PC-3 (cell line): ENCODE measurements at regions of chr22 and their contacts with region 1.

Region 1: GRCh38 chr22:46035742-46036557 is 59.0 kb upstream of the WNT7B start:
- DNase-seq: peak; percentile 97
- ATAC-seq: peak; percentile 88
- H3K4me3 ChIP-seq: peak overlapping the region; percentile 81
- H3K27ac ChIP-seq: peak overlapping the region; percentile 85
- H3K4me1 ChIP-seq: peaks cover 23% of the 10 kb centered on the region
- H3K27me3 ChIP-seq: no peaks in the 10 kb centered on the region
- CTCF ChIP-seq: no peak

Region 2: GRCh38 chr22:46006379-46007002 is 29.5 kb before region 1 on chr22:
- CTCF ChIA-PET with region 1: interaction called, 77 read pairs
- POLR2A ChIA-PET with region 1: interaction called, 23 read pairs
- intact Hi-C with region 1: loop called (anchors 1 kb)
- DNase-seq: peak; percentile 85
- ATAC-seq: peak; percentile 63
- H3K4me3 ChIP-seq: peak overlapping the region; percentile 56
- H3K27ac ChIP-seq: peak overlapping the region; percentile 96
- H3K4me1 ChIP-seq: peaks cover 50% of the 10 kb centered on the region
- H3K27me3 ChIP-seq: no peaks in the 10 kb centered on the region
- CTCF ChIP-seq: peak; percentile 85

Region 3: GRCh38 chr22:46013460-46014416 is 22.2 kb before region 1 on chr22:
- CTCF ChIA-PET with region 1: interaction called, 13 read pairs
- POLR2A ChIA-PET with region 1: interaction called, 3 read pairs
- intact Hi-C with region 1: loop called (anchors 1 kb)
- DNase-seq: peak; percentile 96
- ATAC-seq: peak; percentile 84
- H3K4me3 ChIP-seq: peak overlapping the region; percentile 68
- H3K27ac ChIP-seq: peak overlapping the region; percentile 99
- H3K4me1 ChIP-seq: peaks cover 59% of the 10 kb centered on the region
- H3K27me3 ChIP-seq: no peaks in the 10 kb centered on the region
- CTCF ChIP-seq: peak; percentile 68

Region 4: GRCh38 chr22:46050916-46051614 is 15.1 kb after region 1 on chr22:
- CTCF ChIA-PET with region 1: interaction called, 3 read pairs
- POLR2A ChIA-PET with region 1: interaction called, 22 read pairs
- intact Hi-C with region 1: no loop called
- DNase-seq: no peak
- ATAC-seq: no peak
- H3K4me3 ChIP-seq: no peak overlapping the region
- H3K27ac ChIP-seq: no peak overlapping the region
- H3K4me1 ChIP-seq: peaks cover 39% of the 10 kb centered on the region
- H3K27me3 ChIP-seq: no peaks in the 10 kb centered on the region
- CTCF ChIP-seq: no peak

Region 5: GRCh38 chr22:46099740-46100139 is 63.8 kb after region 1 on chr22:
- CTCF ChIA-PET with region 1: no interaction called
- POLR2A ChIA-PET with region 1: no interaction called
- intact Hi-C with region 1: no loop called
- DNase-seq: no peak
- ATAC-seq: no peak
- H3K4me3 ChIP-seq: no peak overlapping the region
- H3K27ac ChIP-seq: no peak overlapping the region
- H3K4me1 ChIP-seq: no peaks in the 10 kb centered on the region
- H3K27me3 ChIP-seq: no peaks in the 10 kb centered on the region
- CTCF ChIP-seq: no peak